Right ventricle myocardium inferior (tissue), 1 donor: ENCODE measurements at regions of chr1 and their contacts with region 1.

Region 1: DNA sequence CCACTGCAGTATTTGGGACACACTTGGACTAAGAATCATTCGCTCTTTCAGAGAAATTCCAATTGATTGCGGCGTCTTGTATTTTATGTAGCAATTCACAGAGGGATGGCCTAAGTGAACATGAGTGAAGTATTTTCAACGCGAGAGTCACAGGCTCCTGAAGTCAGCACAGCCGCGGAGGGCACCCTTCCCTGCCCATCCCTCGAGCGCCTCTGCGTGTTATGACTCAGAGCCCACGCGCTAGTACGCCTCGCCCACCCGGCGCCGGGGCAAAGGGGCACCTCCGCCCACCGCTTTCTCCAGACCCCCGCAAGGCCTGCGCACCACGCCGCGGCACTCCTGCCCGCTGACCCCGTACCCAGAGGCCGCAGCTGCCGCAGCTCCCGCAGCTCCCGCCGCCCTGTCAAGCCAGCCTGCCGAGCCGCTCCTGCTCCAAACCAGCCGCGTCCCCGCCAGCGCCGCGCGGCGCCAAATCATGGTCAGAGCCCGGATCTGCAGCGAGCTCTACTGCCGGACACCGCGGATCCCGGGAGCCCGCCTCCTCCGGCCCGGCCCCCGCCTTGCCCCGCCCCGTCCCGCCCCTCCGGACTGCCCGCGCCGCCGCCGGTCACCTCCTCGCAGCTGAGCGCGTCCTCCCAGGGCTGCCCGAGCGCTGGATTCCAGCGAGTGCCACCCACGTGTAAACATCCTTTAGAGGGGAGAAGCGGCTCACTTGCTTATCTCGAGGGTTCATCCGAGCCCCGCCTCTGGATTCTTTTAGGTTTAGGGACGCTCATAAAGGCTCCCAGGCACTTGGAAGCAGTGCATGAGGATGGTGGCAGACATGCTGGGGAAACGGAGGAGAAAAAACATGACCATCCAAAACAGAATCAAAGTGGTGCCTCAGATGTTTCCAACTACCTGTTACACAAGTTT is at the start of gene GLRX2:
- DNase-seq: peak; percentile 94
- ATAC-seq: peak; percentile 99
- total RNA-seq, gene GLRX2: 45.3 TPM

Region 2: DNA sequence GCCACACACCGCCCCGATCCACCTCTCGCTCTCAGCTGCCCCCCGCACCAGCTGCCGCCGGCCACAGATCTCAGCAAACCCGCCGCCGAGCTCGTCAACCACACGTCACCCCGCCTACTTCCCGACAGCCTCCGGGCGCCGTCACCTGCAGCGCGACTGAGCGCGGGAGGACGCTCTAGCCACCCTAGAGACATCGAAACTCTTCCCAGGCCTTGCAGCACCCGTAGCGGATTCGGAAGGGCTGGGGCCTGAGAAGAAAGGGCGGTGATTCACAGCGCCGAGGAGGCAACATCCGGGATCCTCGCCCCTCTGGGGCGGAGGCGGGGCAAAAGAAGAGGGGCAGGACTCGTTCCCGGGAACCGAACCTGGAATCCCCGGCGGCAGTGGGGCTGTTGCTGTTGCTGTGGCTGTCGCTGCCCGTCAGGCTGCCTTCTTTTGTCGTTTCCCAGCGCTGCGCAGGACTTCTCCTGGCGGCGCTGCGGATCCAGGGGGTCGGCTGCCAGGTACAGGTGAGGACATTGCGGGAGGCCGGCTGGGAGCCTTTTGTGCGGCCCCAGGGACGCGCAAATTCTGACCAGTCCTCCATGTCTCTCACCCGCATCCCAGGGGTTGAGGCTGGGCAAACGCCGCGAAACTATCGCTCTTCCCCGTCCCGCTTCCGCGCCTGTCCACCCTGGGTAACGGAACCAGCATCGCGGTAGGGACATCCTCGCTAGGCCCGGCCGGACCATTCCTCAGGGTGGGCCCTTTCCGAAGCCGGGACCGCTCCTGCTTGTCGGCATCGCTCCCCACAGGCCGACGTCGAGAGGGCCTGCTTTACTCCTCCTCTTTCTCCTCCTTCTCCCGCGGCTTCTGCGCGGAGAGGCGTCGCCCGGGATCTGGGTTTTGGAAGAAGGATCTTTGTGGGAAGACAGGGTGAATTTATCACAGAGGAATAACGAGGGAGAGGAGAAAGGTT is 45.6 kb before region 1 on chr1 and contains the starts of genes RO60 and UCHL5:
- intact Hi-C with region 1: loop called (anchors 2 kb)
- DNase-seq: peak; percentile 97
- ATAC-seq: peak; percentile 99
- total RNA-seq, gene RO60: 42.8 TPM
- total RNA-seq, gene UCHL5: 42.9 TPM

Region 3: DNA sequence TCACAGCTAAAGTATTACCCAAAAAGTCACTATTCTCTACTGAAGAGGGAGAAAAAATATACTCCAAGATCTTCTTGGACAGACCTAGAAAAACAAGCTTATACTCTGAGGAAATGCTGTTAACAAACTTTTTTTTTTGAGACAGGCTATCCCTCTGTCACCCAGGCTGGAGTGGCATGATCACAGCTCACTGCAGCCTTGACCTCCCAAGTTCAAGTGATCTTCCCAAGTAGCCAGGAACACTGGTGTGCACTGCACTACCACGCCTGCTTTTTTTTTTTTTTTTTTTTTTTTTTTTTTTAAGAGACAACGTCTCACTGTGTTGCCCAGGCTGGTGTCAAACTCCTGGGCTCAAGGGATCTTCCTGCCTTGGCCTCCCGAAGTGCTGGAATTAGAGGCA is 17.3 kb before region 1 on chr1:
- intact Hi-C with region 1: loop called (anchors 2 kb)
- DNase-seq: no peak
- ATAC-seq: peak; percentile 42

Region 4: GRCh38 chr1:193121616-193122593 is 16.7 kb after region 1 on chr1 and contains the start of gene CDC73:
- intact Hi-C with region 1: loop called (anchors 1 kb)
- DNase-seq: peak; percentile 99
- ATAC-seq: peak; percentile 100
- total RNA-seq, gene CDC73: 48.6 TPM